ENCODE measurements at regions of chr20 and their contacts with region 1.

Region 1: GRCh38 chr20:31508517-31509244 is 5.6 kb upstream of the HM13 start:
- DNase-seq: no peak
- CTCF ChIP-seq: no peak

Region 2: GRCh38 chr20:31414380-31414779 is 94.3 kb before region 1 on chr20:
- in situ Hi-C with region 1: no loop called
- DNase-seq: no peak
- CTCF ChIP-seq: no peak

Region 3: GRCh38 chr20:31452575-31452974 is 56.1 kb before region 1 on chr20:
- in situ Hi-C with region 1: loop called (anchors 10 kb)
- DNase-seq: no peak
- CTCF ChIP-seq: no peak

Region 4: DNA sequence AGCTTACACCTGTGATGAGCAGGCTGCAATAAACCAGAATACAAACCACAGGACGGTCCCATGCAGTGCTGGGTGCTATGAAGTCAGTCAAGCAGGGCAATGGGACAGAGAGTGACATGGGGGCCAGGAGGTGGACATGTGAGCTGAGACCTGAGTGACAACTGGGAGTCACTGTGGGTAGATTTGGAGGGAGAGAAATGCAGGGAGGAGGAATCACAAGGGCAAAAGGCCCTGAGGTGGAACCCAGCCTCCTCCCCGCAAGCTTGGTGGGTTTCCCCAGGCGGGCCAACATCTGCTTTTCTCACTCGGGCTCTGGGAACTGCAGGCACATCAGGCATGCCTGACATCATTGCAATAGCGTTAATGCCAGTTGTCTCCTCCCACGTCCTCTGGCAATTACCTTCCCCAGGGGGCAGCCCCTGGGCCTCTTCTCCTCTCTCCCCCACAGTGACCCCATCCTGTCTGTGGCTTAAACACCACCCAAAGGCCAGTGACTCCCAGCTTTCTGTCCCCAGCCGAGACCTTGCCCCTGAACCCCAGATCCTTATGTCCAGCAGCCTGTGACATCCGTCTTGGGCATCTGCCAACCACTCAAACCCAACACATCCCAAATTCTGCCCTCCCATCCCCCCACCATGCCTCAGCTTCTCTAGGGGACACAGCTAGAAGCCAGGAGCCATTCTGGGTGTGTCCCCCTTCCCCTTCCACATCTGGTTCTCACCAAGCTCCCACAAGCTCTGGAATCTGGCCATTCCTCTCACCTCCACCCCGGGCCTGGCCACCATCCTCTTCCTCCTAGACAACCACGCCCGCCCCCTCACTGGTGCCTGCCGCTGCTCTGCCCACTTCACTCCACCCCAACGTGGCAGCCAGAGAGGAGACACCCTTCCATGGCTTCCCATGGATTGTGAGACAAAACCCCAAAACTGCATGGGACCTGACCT is 415.0 kb after region 1 on chr20:
- in situ Hi-C with region 1: no loop called
- DNase-seq: peak; percentile 79
- CTCF ChIP-seq: no peak